Activated CD8-positive, alpha-beta T cell treated with anti-CD3 and anti-CD28 coated beads for 36 hours (primary cell): ENCODE measurements at regions of chr7 and their contacts with region 1.

Region 1: GRCh38 chr7:129617652-129618051 is 6.1 kb downstream of the NRF1 start:
- DNase-seq: no peak
- ATAC-seq: no peak
- H3K4me3 Mint-ChIP-seq: no peak overlapping the region
- H3K27ac Mint-ChIP-seq: no peak overlapping the region
- H3K4me1 Mint-ChIP-seq: peaks cover 74% of the 10 kb centered on the region
- H3K27me3 Mint-ChIP-seq: no peaks in the 10 kb centered on the region
- CTCF ChIP-seq: no peak

Region 2: GRCh38 chr7:129635300-129636029 is 17.8 kb after region 1 on chr7:
- CTCF ChIA-PET with region 1: interaction called, 19 read pairs
- POLR2A ChIA-PET with region 1: interaction called, 7 read pairs
- intact Hi-C with region 1: loop called (anchors 2 kb)
- DNase-seq: peak; percentile 87
- ATAC-seq: peak; percentile 98
- H3K4me3 Mint-ChIP-seq: no peak overlapping the region
- H3K27ac Mint-ChIP-seq: no peak overlapping the region
- H3K4me1 Mint-ChIP-seq: peaks cover 46% of the 10 kb centered on the region
- H3K27me3 Mint-ChIP-seq: no peaks in the 10 kb centered on the region
- CTCF ChIP-seq: peak; percentile 89